ENCODE measurements at regions of chr7 and their contacts with region 1.

Region 1: GRCh38 chr7:139602143-139602722 is 78.7 kb downstream of the CLEC2L start:
- DNase-seq: no peak
- ATAC-seq: peak; percentile 61

Region 2: DNA sequence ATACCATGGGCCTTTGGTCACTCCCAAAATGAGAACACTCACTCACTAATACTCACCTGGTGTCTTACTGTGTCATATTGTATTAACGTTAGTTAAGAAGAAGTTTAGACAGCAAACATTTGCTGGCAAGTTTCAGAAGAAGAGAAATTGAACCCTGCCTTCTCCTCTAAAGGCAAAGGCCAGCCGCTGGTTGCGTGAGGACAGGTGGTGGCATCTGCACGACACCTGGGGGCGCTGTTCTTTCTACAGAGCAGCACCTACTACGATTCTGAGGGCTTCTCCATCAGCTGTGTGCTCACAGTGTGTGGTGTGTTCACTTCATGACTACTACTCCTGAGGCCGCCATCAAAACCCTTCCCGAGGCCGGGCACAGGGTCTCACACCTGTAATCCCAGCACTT is 96.7 kb before region 1 on chr7:
- intact Hi-C with region 1: loop called (anchors 10 kb)
- DNase-seq: no peak
- ATAC-seq: no peak